ENCODE measurements at regions of chr19 and their contacts with region 1.

Region 1: DNA sequence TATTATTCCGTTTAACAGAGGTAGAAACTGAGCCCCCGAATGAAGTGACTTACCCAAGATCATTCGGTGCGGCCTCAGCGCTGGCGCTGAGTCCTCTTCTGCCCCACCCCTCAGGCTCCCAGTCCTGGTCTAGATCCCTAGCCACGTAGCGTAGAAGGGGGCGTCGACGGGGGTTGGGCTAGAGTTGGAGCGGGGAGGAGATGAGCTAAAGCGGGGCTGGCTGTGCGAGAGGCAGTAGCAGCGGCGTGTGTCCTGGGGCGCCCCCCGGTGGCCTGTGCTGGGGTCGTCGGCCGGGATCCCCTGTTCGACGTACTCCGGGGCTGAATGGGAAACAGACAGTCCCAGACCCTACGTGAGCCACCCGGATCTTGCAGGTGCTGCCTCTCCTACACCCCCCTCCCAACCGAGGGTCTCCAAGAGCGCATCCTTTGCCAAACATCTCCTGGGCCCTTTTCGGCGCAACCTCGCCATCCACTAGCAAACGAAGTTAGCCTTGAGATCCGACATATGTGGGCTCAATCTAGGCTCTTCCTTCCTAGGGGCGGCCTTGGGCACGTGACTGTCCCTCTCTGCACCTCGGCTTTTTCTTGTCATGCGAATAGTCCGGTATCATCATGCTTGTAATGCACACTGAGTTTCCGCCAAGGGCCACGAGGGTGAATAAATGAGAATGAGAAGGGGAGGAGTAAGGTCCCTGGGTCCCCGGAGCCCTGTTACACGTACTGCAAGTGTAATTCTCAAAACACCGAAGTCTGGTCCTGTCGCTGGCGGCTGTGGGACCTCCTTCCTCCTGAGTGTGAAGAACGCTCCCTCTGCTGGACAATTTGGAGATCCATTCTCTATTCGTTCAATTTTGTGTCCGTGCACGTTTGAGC is 47.7 kb downstream of the CYP4F22 start:
- DNase-seq: peak; percentile 94
- H3K4me3 Mint-ChIP-seq: peak overlapping the region; percentile 82
- H3K27ac Mint-ChIP-seq: no peak overlapping the region
- H3K4me1 Mint-ChIP-seq: peaks cover 15% of the 10 kb centered on the region
- H3K27me3 Mint-ChIP-seq: peaks cover 14% of the 10 kb centered on the region
- CTCF ChIP-seq: peak; percentile 55

Region 2: GRCh38 chr19:15418588-15419412 is 137.2 kb before region 1 on chr19 and contains the start of gene AKAP8L:
- CTCF ChIA-PET with region 1: interaction called, 35 read pairs
- intact Hi-C with region 1: loop called (anchors 1 kb)
- DNase-seq: peak; percentile 94
- H3K4me3 Mint-ChIP-seq: peak within 1 kb of the TSS; percentile 97
- H3K27ac Mint-ChIP-seq: peak within 1 kb of the TSS; percentile 96
- H3K4me1 Mint-ChIP-seq: peaks cover 14% of the 10 kb centered on the region
- H3K27me3 Mint-ChIP-seq: no peaks in the 10 kb centered on the region
- CTCF ChIP-seq: peak; percentile 49
- total RNA-seq, gene AKAP8L: 94.0 and 96.8 TPM in 2 replicates

Region 3: DNA sequence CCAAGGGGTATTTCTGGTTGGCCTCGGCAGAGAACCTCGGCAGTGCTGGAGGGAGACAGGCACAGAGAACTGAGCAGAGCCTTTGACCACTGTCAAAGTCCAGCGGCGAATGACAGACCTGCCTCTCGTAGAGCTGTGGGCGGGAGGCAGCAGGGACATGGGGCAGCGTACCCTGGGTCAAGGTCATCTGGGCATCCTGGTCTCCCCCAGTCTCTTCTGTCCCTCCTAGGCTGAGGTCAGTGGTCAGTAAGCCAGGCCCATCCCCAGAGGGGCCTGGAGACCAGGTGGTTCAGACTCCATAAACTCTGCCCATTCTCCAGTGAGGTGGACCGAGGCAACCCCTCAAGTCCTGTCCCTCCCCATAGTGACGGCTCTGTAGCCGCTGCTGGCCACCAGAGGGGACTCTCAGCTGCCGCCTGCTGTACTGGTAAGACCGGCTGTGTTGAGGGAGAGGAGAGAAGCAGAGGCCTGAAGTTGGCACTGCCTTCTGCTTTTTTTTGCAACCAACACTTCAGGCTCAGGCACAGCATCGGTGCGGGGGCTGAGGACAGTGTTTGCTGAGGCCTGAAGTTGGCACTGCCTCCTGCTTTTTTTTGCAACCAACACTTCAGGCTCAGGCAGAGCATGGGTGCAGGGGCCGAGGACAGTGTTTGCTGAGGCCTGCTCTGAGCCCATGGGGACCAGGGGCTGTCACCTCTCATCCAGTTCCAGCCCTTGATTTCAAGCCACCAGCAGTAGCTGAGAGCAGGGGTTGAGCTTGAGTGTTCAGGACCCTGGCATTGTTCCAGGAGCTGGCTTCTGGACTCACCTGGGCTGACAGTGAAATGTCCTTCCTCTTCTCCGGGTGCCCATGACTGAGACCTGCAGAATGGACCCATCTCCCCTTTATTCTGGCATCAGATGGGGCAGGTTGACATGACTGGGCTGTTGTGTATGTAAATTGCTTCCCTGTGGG is 76.3 kb before region 1 on chr19 and contains the start of gene PGLYRP2:
- CTCF ChIA-PET with region 1: interaction called, 5 read pairs
- intact Hi-C with region 1: loop called (anchors 1 kb)
- DNase-seq: peak; percentile 42
- H3K4me3 Mint-ChIP-seq: no peak within 1 kb of the TSS
- H3K27ac Mint-ChIP-seq: no peak within 1 kb of the TSS
- H3K4me1 Mint-ChIP-seq: peaks cover 9% of the 10 kb centered on the region
- H3K27me3 Mint-ChIP-seq: no peaks in the 10 kb centered on the region
- CTCF ChIP-seq: no peak
- total RNA-seq, gene PGLYRP2: not detected in 2 replicates

Region 4: GRCh38 chr19:15584541-15585115 is 28.6 kb after region 1 on chr19:
- CTCF ChIA-PET with region 1: no interaction called
- intact Hi-C with region 1: no loop called
- DNase-seq: peak; percentile 84
- H3K4me3 Mint-ChIP-seq: peak overlapping the region; percentile 56
- H3K27ac Mint-ChIP-seq: no peak overlapping the region
- H3K4me1 Mint-ChIP-seq: no peaks in the 10 kb centered on the region
- H3K27me3 Mint-ChIP-seq: peaks cover 34% of the 10 kb centered on the region
- CTCF ChIP-seq: peak; percentile 87

Region 5: DNA sequence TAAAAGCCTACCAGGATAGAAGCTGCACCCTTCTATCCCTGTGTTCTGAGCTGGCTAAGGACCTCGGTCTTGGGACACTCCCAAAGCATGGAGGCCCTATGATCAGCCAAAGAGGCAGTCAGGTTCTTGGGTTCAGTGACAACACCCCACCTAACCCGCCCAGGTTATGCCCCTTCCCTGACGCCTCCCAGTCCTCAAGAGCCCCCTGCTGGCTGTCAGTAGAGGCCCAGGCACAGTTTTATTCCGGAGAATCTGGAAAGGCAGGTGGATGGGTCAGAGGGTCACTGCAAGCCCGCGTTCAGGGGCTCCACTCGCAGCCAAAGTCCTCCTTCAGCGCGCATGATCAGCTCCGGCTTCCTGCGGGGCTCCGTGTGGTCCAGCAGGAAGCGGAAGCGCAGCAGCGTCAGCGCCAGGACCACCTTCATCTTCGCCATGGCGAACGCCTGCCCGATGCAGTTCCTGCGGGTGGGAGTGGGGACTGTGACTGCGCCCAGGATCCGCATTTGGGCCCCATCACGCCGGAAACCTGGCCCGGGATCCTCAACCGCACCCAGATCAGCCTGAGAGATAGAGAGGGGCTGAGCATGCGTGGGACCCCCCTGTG is 204.1 kb after region 1 on chr19:
- CTCF ChIA-PET with region 1: no interaction called
- intact Hi-C with region 1: no loop called
- DNase-seq: peak; percentile 34
- H3K4me3 Mint-ChIP-seq: peak overlapping the region; percentile 58
- H3K27ac Mint-ChIP-seq: no peak overlapping the region
- H3K4me1 Mint-ChIP-seq: peaks cover 7% of the 10 kb centered on the region
- H3K27me3 Mint-ChIP-seq: peaks cover 47% of the 10 kb centered on the region
- CTCF ChIP-seq: peak; percentile 32